Activated T-helper 2 cell treated with anti-CD3 and anti-CD28 coated beads, Interferon-gamma antibody, Interleukin-2, Interleukin-4, amounts not matched to agents 10 μg/mL and 5 μg/mL and 100 μg/mL, durations not matched to agents 14 hours and 24 hours and 36 hours (primary cell): ENCODE measurements at regions of chr4 and their contacts with region 1.

Region 1: DNA sequence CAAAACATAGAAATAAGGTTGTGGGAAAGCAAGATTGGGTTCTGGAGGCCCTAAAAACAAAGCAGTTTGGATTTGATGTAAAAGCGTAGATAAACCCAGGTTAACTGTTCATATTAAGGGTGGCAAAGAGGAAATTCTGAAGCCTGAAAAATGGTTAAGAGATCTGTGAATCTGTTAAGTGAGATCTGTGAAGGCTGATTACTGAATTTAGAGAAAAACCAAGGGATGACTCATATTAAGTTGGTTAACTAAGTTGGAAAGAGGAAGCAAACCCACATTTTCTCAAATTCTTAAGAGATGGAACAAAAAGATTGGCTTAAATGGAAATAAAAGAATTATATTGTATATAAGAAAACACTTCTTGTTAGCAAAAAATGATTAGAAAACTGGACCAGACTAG is 22.8 kb downstream of the GPAT3 start:
- DNase-seq: no peak
- H3K4me3 Mint-ChIP-seq: peak overlapping the region; percentile 2
- H3K27ac Mint-ChIP-seq: peak overlapping the region; percentile 58
- H3K4me1 Mint-ChIP-seq: peaks cover 56% of the 10 kb centered on the region
- H3K27me3 Mint-ChIP-seq: peaks cover 13% of the 10 kb centered on the region

Region 2: GRCh38 chr4:83503974-83504373 is 54.7 kb before region 1 on chr4:
- intact Hi-C with region 1: loop called (anchors 2 kb)
- DNase-seq: no peak
- H3K4me3 Mint-ChIP-seq: no peak overlapping the region
- H3K27ac Mint-ChIP-seq: no peak overlapping the region
- H3K4me1 Mint-ChIP-seq: peaks cover 7% of the 10 kb centered on the region
- H3K27me3 Mint-ChIP-seq: no peaks in the 10 kb centered on the region

Region 3: DNA sequence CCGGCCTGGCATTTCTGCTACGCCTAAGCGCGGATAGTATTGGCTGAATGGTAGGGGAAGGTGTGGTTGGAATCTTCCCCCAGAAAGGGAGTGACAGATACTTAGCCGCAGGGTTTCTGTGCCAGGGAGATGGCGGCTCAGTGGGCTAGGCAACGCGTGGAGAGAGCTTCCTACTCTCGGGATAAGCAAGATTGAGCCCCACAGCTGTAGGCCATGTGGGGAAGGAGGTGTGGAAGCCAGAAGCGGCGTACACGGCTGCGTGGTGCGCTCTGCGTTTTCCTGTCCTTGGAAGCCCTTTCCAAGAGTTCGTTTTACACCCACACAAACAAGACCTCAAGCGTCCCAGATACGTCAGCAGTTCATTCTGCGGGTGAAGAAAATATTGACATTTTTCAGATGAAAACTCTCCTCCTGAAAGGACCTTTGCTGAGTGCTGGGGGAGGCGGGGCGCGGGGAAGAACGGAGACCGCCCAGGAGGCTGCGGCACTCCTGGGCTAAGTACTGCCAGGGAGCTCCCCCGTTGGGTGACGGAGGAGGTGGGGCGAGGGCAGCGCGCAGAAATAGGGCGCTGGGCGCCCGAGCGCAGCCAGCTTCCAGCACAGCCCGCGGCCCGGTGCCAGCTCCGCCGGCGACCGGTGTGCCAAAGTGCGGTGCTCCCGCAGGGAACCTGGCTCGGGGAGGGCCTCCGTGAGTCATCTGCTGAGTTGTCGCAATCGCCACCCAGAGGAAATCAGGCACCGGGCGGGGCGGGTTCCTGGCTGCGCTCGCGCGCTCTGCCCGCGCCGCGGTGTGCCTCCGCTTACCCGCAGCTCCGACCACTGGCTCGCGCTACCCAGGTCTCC is 22.9 kb before region 1 on chr4 and contains the start of gene GPAT3:
- intact Hi-C with region 1: loop called (anchors 1 kb)
- DNase-seq: peak; percentile 65
- H3K4me3 Mint-ChIP-seq: peak within 1 kb of the TSS; percentile 78
- H3K27ac Mint-ChIP-seq: peak within 1 kb of the TSS; percentile 54
- H3K4me1 Mint-ChIP-seq: peaks cover 22% of the 10 kb centered on the region
- H3K27me3 Mint-ChIP-seq: peaks cover 49% of the 10 kb centered on the region
- total RNA-seq, gene GPAT3: 8.8 and 9.7 TPM in 2 replicates

Region 4: GRCh38 chr4:83548151-83548905 is 10.4 kb before region 1 on chr4:
- intact Hi-C with region 1: loop called (anchors 1 kb)
- DNase-seq: peak; percentile 68
- H3K4me3 Mint-ChIP-seq: no peak overlapping the region
- H3K27ac Mint-ChIP-seq: no peak overlapping the region
- H3K4me1 Mint-ChIP-seq: peaks cover 34% of the 10 kb centered on the region
- H3K27me3 Mint-ChIP-seq: peaks cover 1% of the 10 kb centered on the region